Psoas muscle (tissue), 8 donors: ENCODE measurements at regions of chr13 and their contacts with region 1.

Region 1: GRCh38 chr13:32530841-32531253 is 7.7 kb downstream of the N4BP2L2 start:
- DNase-seq: no peak
- ATAC-seq: peak; percentile 51 to 71 (median 60)
- H3K4me3 ChIP-seq: peak overlapping the region; percentile 41
- H3K27ac ChIP-seq: peak overlapping the region; percentile 64
- H3K4me1 ChIP-seq: peaks cover 78% of the 10 kb centered on the region
- H3K27me3 ChIP-seq: no peaks in the 10 kb centered on the region
- CTCF ChIP-seq: no peak

Region 2: GRCh38 chr13:32472194-32472621 is 58.6 kb before region 1 on chr13:
- intact Hi-C with region 1: loop called in 1 of 2 experiments (anchors 5 kb)
- DNase-seq: no peak
- ATAC-seq: no peak
- H3K4me3 ChIP-seq: no peak overlapping the region
- H3K27ac ChIP-seq: peak overlapping the region; percentile 54
- H3K4me1 ChIP-seq: peaks cover 48% of the 10 kb centered on the region
- H3K27me3 ChIP-seq: no peaks in the 10 kb centered on the region
- CTCF ChIP-seq: no peak